ENCODE measurements at regions of chr1 and their contacts with region 1.

Region 1: GRCh38 chr1:241499910-241500309 is 19.6 kb downstream of the FH start:
- DNase-seq: peak; percentile 59
- H3K4me3 ChIP-seq: no peak overlapping the region
- H3K27ac ChIP-seq: no peak overlapping the region
- H3K4me1 ChIP-seq: no peaks in the 10 kb centered on the region
- H3K27me3 ChIP-seq: no peaks in the 10 kb centered on the region
- CTCF ChIP-seq: peak; percentile 24 to 42
- POLR2A ChIP-seq: no peak

Region 2: GRCh38 chr1:240946926-240947325 is 553.0 kb before region 1 on chr1:
- CTCF ChIA-PET with region 1: no interaction called
- POLR2A ChIA-PET with region 1: no interaction called
- dilution Hi-C with region 1: no loop called
- intact Hi-C with region 1: loop called (anchors 5 kb)
- DNase-seq: peak; percentile 52
- H3K4me3 ChIP-seq: no peak overlapping the region
- H3K27ac ChIP-seq: no peak overlapping the region
- H3K4me1 ChIP-seq: peaks cover 11% of the 10 kb centered on the region
- H3K27me3 ChIP-seq: no peaks in the 10 kb centered on the region
- CTCF ChIP-seq: peak; percentile 52 to 54
- POLR2A ChIP-seq: no peak

Region 3: GRCh38 chr1:240967070-240967724 is 532.7 kb before region 1 on chr1:
- CTCF ChIA-PET with region 1: interaction called, 4 read pairs
- POLR2A ChIA-PET with region 1: no interaction called
- dilution Hi-C with region 1: no loop called
- intact Hi-C with region 1: loop called (anchors 5 kb)
- DNase-seq: peak; percentile 4
- H3K4me3 ChIP-seq: no peak overlapping the region
- H3K27ac ChIP-seq: no peak overlapping the region
- H3K4me1 ChIP-seq: no peaks in the 10 kb centered on the region
- H3K27me3 ChIP-seq: no peaks in the 10 kb centered on the region
- CTCF ChIP-seq: peak in 1 of 2 donors; percentile 6
- POLR2A ChIP-seq: no peak

Region 4: DNA sequence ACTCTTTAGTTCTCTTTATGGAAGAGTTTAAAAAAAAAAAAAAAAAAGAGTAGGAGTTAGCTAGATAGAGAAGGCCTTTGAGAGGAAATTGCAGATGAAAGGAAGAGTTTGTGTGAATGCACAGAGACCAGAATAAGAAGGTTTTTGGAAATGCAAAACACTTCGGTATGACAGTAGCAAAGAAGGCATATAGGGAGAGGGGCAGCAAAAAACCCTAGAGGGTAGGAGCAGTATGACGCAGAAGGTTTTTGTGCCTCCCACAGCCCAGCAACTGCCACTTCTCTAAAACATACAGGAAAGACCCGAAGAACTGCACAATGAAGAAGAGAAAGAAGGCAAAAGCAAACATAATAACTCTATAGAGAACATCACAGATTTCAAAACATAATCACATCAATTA is 236.5 kb after region 1 on chr1:
- CTCF ChIA-PET with region 1: no interaction called
- POLR2A ChIA-PET with region 1: no interaction called
- dilution Hi-C with region 1: no loop called
- intact Hi-C with region 1: no loop called
- DNase-seq: no peak
- H3K4me3 ChIP-seq: no peak overlapping the region
- H3K27ac ChIP-seq: no peak overlapping the region
- H3K4me1 ChIP-seq: no peaks in the 10 kb centered on the region
- H3K27me3 ChIP-seq: no peaks in the 10 kb centered on the region
- CTCF ChIP-seq: no peak
- POLR2A ChIP-seq: no peak